PC-3 (cell line): ENCODE measurements at regions of chr6 and their contacts with region 1.

Region 1: GRCh38 chr6:147506704-147507114 is 1.8 kb upstream of the SAMD5 start:
- DNase-seq: peak; percentile 64
- ATAC-seq: peak; percentile 48
- H3K4me3 ChIP-seq: peak overlapping the region; percentile 95
- H3K27ac ChIP-seq: no peak overlapping the region
- H3K4me1 ChIP-seq: peaks cover 13% of the 10 kb centered on the region; the same call in 1 of the 2 replicates
- H3K27me3 ChIP-seq: no peaks in the 10 kb centered on the region
- CTCF ChIP-seq: peak; percentile 81

Region 2: DNA sequence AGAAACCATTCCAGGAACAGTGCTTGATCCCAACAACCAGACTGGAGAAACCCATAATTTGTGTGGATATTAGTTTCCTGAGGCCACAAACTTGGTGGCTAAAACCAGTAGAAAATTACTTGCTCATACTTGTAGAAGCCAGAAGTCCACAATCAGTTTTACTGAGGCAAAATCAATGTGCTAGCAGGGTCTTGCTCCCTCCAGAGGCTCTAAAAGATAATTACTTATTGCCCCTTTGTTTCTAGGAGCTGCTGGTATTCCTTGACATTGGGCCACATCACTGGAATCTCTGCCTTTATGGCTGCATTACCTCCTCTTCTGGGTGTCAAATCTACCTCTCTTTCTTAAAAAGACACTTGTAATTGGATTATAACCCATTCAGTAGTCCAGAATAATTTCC is 140.4 kb before region 1 on chr6:
- CTCF ChIA-PET with region 1: no interaction called
- POLR2A ChIA-PET with region 1: no interaction called
- intact Hi-C with region 1: no loop called
- DNase-seq: no peak
- ATAC-seq: no peak
- H3K4me3 ChIP-seq: no peak overlapping the region
- H3K27ac ChIP-seq: no peak overlapping the region
- H3K4me1 ChIP-seq: no peaks in the 10 kb centered on the region
- H3K27me3 ChIP-seq: no peaks in the 10 kb centered on the region
- CTCF ChIP-seq: peak; percentile 25; the same call in 1 of the 2 replicates

Region 3: GRCh38 chr6:147579667-147580066 is 73.0 kb after region 1 on chr6:
- CTCF ChIA-PET with region 1: interaction called, 21 read pairs
- POLR2A ChIA-PET with region 1: no interaction called
- intact Hi-C with region 1: loop called (anchors 5 kb)
- DNase-seq: peak; percentile 75
- ATAC-seq: peak; percentile 81
- H3K4me3 ChIP-seq: no peak overlapping the region
- H3K27ac ChIP-seq: no peak overlapping the region
- H3K4me1 ChIP-seq: peaks cover 29% of the 10 kb centered on the region
- H3K27me3 ChIP-seq: no peaks in the 10 kb centered on the region
- CTCF ChIP-seq: no peak

Region 4: GRCh38 chr6:147642458-147642857 is 135.7 kb after region 1 on chr6:
- CTCF ChIA-PET with region 1: no interaction called
- POLR2A ChIA-PET with region 1: no interaction called
- intact Hi-C with region 1: loop called (anchors 2 kb)
- DNase-seq: peak; percentile 68
- ATAC-seq: peak; percentile 87
- H3K4me3 ChIP-seq: no peak overlapping the region; the same call in 1 of the 2 replicates
- H3K27ac ChIP-seq: peak overlapping the region; percentile 46
- H3K4me1 ChIP-seq: peaks cover 16% of the 10 kb centered on the region
- H3K27me3 ChIP-seq: no peaks in the 10 kb centered on the region
- CTCF ChIP-seq: no peak

Region 5: GRCh38 chr6:147970975-147971374 is 464.3 kb after region 1 on chr6:
- CTCF ChIA-PET with region 1: interaction called, 5 read pairs
- POLR2A ChIA-PET with region 1: no interaction called
- intact Hi-C with region 1: loop called (anchors 2 kb)
- DNase-seq: peak; percentile 44
- ATAC-seq: peak; percentile 58
- H3K4me3 ChIP-seq: no peak overlapping the region
- H3K27ac ChIP-seq: no peak overlapping the region
- H3K4me1 ChIP-seq: peaks cover 17% of the 10 kb centered on the region
- H3K27me3 ChIP-seq: no peaks in the 10 kb centered on the region
- CTCF ChIP-seq: peak; percentile 61

Region 6: DNA sequence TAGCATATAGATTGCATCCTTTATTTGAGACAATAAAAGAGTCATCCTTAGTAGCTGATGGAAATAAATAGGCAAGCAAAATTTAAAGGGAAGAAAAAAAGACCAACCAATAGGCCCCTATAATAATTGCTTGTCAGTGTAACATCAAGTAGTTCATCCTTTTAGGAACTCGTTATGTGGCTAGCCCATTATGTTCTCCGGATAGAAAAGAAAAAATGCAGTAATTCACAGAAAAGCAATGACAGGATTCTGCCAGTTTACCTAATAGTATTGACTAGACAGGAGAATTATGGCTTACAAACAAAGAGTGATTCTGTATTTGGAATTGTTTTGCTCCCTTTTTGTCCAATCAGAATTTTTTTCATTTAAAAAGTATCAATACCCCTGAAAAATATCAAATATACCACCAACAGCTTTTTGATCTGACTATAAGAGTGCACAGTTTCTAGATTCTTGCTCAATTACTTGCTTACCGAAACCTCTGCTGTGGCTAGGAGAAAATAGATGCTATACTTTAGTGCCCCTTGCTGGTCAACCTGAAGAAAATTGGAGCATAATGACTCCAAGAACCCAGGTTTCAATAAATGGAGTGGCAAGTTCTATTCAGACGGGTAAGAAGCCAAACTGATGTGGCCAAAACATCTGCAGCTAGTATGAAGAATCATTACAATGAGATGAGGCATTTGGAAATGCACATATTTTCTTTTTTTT is 744.4 kb after region 1 on chr6:
- CTCF ChIA-PET with region 1: no interaction called
- POLR2A ChIA-PET with region 1: no interaction called
- intact Hi-C with region 1: loop called (anchors 1 kb)
- DNase-seq: peak; percentile 56
- ATAC-seq: peak; percentile 67
- H3K4me3 ChIP-seq: no peak overlapping the region
- H3K27ac ChIP-seq: no peak overlapping the region
- H3K4me1 ChIP-seq: no peaks in the 10 kb centered on the region
- H3K27me3 ChIP-seq: no peaks in the 10 kb centered on the region
- CTCF ChIP-seq: peak; percentile 67